ENCODE measurements at regions of chr20 and their contacts with region 1.

Region 1: DNA sequence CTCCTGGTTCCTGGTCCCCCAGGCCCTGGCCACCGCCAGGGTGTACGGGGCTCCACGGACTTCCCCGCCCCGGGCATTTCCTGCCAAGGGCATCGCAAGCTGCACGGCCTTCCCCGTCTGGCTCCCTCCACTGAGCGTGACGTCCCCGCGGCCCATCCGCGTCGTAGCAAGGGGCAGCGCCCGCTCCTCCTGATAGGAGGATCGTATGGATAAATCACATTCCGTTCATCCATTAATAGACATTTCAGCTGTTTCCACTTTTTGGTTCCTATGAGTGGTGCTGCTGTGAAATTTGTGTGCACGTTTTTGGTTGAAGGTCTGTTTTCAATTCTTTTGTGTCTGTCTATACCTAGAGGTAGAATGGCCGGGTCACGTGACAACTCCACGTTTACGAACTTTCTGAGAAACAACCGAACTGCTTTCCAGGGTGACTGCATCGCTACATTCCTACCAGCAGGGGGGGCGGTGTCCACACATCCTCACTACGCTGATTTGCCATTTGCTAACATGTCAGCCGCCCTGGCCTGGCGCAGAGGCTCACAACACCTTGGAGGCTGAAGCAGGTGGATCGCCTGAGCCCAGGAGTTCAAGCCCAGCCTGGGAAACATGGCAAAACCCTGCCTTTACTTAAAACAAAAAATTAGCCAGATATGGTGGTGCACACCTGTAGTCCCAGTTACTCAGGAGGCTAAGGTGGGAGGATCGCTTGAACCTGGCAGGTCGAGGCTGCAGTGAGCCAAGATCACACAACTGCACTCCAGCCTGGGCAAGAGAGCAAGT is 37.7 kb downstream of the KCNQ2 start:
- DNase-seq: peak; percentile 56 to 84 (median 77)
- ATAC-seq: peak; percentile 89
- H3K4me3 ChIP-seq: peak overlapping the region; percentile 25
- H3K4me3 Mint-ChIP-seq: peak overlapping the region; percentile 50 to 79 (median 70)
- H3K27ac ChIP-seq: peak overlapping the region; percentile 49
- H3K27ac Mint-ChIP-seq: peak overlapping the region; percentile 49 to 93 (median 85)
- H3K4me1 ChIP-seq: peaks cover 0 to 9% of the 10 kb centered on the region in 2 donors
- H3K4me1 Mint-ChIP-seq: peaks cover 8 to 16% (median 14%) of the 10 kb centered on the region in 7 donors
- H3K27me3 ChIP-seq: no peaks in the 10 kb centered on the region
- H3K27me3 Mint-ChIP-seq: peaks cover 0 to 9% (median 0%) of the 10 kb centered on the region in 5 donors

Region 2: DNA sequence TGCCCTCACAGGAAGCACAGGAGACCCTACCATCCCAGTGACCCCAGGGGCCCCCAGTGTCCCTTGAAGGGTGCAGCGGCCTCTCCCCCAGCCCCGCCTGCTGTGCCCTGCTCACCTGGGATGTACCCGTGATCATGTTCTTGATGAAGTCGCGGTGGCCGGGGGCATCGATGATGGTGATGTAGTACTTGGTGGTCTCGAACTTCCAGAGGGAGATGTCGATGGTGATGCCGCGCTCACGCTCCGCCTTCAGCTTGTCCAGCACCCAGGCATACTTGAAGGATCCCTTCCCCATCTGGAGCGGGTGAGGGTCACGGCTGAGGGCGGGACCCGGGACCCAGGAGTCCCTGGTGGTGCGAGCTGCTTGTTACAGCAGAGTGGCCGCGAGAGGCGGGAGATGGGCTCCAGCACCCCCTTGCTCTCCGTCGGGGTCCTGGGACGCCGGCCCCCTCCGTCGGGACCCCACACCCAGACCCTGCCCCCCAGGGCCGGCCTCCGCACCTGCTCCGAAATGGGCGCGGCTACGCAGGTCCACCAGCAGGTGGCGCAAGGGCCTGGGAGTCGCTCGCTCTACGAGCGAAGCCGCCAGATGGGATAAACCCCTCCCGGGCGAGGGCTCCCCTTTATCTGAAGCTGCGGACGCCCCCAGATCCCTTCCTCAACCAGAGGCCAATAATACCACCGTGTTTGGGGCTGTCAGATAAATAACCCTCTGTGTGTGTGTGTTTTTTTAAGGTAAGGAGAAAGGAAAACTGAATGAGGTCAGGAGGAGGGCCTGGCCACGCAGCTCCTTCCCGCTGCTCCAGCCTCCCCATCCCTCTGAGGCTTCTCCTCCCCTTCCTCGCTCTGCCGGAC is 61.2 kb after region 1 on chr20:
- CTCF ChIA-PET with region 1: no interaction called
- POLR2A ChIA-PET with region 1: no interaction called
- intact Hi-C with region 1: loop called in 1 of 2 experiments (anchors 1 kb)
- DNase-seq: peak; percentile 43 to 82 (median 71)
- ATAC-seq: peak; percentile 72
- H3K4me3 ChIP-seq: no peak overlapping the region
- H3K4me3 Mint-ChIP-seq: peak overlapping the region; percentile 41 to 75 (median 66)
- H3K27ac ChIP-seq: no peak overlapping the region
- H3K27ac Mint-ChIP-seq: no peak overlapping the region
- H3K4me1 ChIP-seq: peaks cover 0 to 2% of the 10 kb centered on the region in 2 donors
- H3K4me1 Mint-ChIP-seq: peaks cover 0 to 4% (median 0%) of the 10 kb centered on the region in 7 donors
- H3K27me3 ChIP-seq: no peaks in the 10 kb centered on the region
- H3K27me3 Mint-ChIP-seq: peaks cover 0 to 28% (median 8%) of the 10 kb centered on the region in 5 donors

Region 3: GRCh38 chr20:63520504-63520933 is 85.7 kb after region 1 on chr20 and contains the start of gene PPDPF:
- CTCF ChIA-PET with region 1: no interaction called
- POLR2A ChIA-PET with region 1: no interaction called
- intact Hi-C with region 1: loop called in 1 of 2 experiments (anchors 1 kb)
- DNase-seq: peak; percentile 76 to 92 (median 84)
- ATAC-seq: peak; percentile 96
- H3K4me3 ChIP-seq: peak within 1 kb of the TSS; percentile 86
- H3K4me3 Mint-ChIP-seq: peak within 1 kb of the TSS; percentile 65 to 89 (median 81)
- H3K27ac ChIP-seq: peak within 1 kb of the TSS; percentile 88
- H3K27ac Mint-ChIP-seq: peak within 1 kb of the TSS in 7 of 9 donors; percentile 51 to 88 (median 79)
- H3K4me1 ChIP-seq: peaks cover 11 to 14% of the 10 kb centered on the region in 2 donors
- H3K4me1 Mint-ChIP-seq: peaks cover 4 to 22% (median 9%) of the 10 kb centered on the region in 7 donors
- H3K27me3 ChIP-seq: no peaks in the 10 kb centered on the region
- H3K27me3 Mint-ChIP-seq: peaks cover 0 to 7% (median 0%) of the 10 kb centered on the region in 5 donors
- total RNA-seq, gene PPDPF: 138 to 225 (median 184) TPM

Region 4: DNA sequence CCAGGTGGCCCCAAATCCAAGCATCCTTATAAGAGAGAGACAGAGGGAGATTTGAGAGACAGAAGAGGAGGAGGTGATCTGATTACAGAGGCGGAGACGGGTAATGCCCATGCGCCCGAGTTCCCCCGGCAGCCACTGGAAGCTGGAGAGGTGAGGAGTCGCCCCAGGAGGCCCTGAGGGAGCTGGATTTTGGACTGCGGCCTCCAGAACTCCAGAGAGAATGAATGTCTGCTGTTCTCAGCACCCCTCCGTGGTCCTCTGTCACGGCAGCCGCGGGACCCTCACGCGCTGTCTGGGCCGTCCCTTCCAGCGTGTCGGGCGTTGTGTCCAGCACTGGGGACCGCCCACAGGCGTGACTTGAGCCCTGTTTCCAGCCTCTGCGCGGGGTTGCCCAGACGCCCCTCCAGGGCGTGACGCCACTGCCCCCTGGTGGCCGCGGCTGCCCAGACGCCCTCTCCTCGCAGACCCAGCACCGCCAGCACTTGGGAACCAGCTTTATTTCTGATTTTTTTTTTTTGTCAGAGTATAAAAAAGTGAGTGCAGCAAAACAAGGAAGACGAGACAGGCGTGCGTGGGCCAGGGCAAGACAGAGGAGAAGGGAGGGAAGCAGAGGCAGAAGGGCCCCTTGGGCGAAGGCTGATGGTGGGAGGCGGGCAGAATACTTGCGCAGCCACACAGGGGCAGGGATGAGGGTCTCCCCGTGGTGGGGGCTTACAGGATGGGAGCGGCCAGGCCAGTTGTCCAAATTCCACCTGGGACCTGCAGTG is 539.0 kb after region 1 on chr20:
- CTCF ChIA-PET with region 1: no interaction called
- POLR2A ChIA-PET with region 1: no interaction called
- intact Hi-C with region 1: loop called in 1 of 2 experiments (anchors 1 kb)
- DNase-seq: peak; percentile 59 to 89 (median 78)
- ATAC-seq: peak; percentile 81
- H3K4me3 ChIP-seq: no peak overlapping the region
- H3K4me3 Mint-ChIP-seq: peak overlapping the region in 5 of 10 donors; percentile 7 to 71 (median 36)
- H3K27ac ChIP-seq: peak overlapping the region; percentile 35
- H3K27ac Mint-ChIP-seq: peak overlapping the region; percentile 16 to 88 (median 71)
- H3K4me1 ChIP-seq: peaks cover 16 to 36% of the 10 kb centered on the region in 2 donors
- H3K4me1 Mint-ChIP-seq: peaks cover 34 to 63% (median 54%) of the 10 kb centered on the region in 7 donors
- H3K27me3 ChIP-seq: no peaks in the 10 kb centered on the region
- H3K27me3 Mint-ChIP-seq: peaks cover 0 to 2% (median 0%) of the 10 kb centered on the region in 5 donors